ENCODE measurements at regions of chr1 and their contacts with region 1.

Region 1: GRCh38 chr1:202348509-202349205 is at the start of gene PPP1R12B:
- DNase-seq: peak; percentile 97
- ATAC-seq: peak; percentile 99
- H3K4me3 Mint-ChIP-seq: peak within 1 kb of the TSS; percentile 76
- H3K27ac Mint-ChIP-seq: peak within 1 kb of the TSS; percentile 86
- H3K4me1 Mint-ChIP-seq: peaks cover 22% of the 10 kb centered on the region
- H3K27me3 Mint-ChIP-seq: no peaks in the 10 kb centered on the region
- total RNA-seq, gene PPP1R12B: 10.3 to 13.2 TPM

Region 2: DNA sequence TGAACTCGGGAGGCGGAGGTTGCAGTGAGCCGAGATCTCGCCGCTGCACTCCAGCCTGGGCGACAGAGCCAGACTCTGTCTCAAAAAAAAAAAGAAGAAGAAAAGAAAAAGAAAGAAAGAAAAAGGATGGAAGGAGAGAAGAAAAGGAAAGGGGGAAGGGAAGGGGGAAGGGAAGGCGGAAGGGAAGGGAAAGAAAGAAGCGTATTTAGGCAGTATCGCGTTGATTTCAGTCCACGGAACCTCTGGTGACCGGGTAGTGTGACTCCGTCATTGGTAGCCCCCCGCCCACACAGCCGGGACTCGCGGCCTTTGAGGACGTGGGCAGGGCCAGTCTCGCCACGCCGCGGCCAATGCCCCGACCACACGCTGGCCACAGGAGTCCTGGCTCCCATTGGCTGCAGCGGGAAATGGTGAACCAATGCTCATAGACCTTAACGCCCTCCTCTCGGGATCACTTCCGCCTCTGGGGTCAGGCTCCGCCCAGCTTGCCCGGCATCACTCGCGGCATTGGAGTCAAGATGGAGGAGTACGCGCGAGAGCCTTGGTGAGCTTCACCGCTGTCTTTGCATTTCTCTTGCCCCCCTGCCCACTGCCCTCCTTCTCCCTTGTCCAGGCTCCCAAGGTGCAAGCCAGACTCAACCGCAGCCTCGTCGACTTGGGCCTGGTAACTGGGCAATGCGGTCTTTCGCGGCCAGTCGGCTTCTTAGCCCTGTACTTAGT is 393.5 kb before region 1 on chr1 and contains the start of gene TIMM17A:
- CTCF ChIA-PET with region 1: no interaction called
- POLR2A ChIA-PET with region 1: no interaction called
- intact Hi-C with region 1: loop called (anchors 2 to 10 kb)
- DNase-seq: peak; percentile 97
- ATAC-seq: peak; percentile 100
- H3K4me3 Mint-ChIP-seq: peak within 1 kb of the TSS; percentile 99
- H3K27ac Mint-ChIP-seq: peak within 1 kb of the TSS; percentile 97
- H3K4me1 Mint-ChIP-seq: peaks cover 16% of the 10 kb centered on the region
- H3K27me3 Mint-ChIP-seq: no peaks in the 10 kb centered on the region
- total RNA-seq, gene TIMM17A: 51.9 to 70.6 TPM

Region 3: DNA sequence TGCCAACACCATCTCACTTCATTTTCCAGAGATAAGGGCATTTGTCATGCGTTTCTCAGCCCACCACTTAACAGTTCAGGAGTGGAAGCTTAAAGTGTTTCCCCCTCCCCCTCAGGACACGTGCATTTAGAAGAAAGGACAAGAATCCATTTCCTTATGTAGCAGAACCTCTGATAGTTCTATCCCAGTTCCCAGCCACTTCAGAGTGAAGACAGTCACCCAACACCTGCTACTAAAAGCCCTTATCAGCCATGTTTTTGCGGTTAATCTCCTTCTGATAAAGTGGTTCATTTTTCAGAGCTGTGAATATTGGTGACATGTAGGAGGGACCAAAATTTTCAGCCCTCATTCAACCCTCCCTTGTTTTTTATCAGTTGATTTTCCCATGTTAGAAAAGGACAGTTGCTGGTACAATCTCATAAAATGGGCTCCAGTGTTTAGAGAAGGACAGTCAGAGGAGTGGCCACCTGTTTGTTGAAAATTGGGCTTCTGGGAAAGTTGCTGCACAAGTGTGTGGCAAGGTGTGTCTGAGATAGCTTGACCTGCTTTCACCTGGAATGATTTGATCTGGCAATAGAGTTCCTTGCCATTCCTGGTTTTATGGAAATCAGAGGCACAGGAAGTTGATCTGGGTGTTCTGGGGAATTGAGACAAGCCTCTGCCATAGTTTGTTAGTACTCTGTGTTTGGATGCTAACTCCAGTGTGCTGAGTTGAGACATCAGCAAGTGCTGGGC is 113.9 kb after region 1 on chr1:
- CTCF ChIA-PET with region 1: no interaction called
- POLR2A ChIA-PET with region 1: no interaction called
- intact Hi-C with region 1: loop called in 1 of 2 experiments (anchors 10 kb)
- DNase-seq: no peak
- ATAC-seq: no peak
- H3K4me3 Mint-ChIP-seq: no peak overlapping the region
- H3K27ac Mint-ChIP-seq: no peak overlapping the region
- H3K4me1 Mint-ChIP-seq: no peaks in the 10 kb centered on the region
- H3K27me3 Mint-ChIP-seq: no peaks in the 10 kb centered on the region

Region 4: GRCh38 chr1:202625416-202626360 is 277.0 kb after region 1 on chr1:
- CTCF ChIA-PET with region 1: no interaction called
- POLR2A ChIA-PET with region 1: no interaction called
- intact Hi-C with region 1: loop called (anchors 1 to 10 kb)
- DNase-seq: peak; percentile 82
- ATAC-seq: peak; percentile 82
- H3K4me3 Mint-ChIP-seq: no peak overlapping the region
- H3K27ac Mint-ChIP-seq: no peak overlapping the region
- H3K4me1 Mint-ChIP-seq: peaks cover 27% of the 10 kb centered on the region
- H3K27me3 Mint-ChIP-seq: peaks cover 5% of the 10 kb centered on the region

Region 5: DNA sequence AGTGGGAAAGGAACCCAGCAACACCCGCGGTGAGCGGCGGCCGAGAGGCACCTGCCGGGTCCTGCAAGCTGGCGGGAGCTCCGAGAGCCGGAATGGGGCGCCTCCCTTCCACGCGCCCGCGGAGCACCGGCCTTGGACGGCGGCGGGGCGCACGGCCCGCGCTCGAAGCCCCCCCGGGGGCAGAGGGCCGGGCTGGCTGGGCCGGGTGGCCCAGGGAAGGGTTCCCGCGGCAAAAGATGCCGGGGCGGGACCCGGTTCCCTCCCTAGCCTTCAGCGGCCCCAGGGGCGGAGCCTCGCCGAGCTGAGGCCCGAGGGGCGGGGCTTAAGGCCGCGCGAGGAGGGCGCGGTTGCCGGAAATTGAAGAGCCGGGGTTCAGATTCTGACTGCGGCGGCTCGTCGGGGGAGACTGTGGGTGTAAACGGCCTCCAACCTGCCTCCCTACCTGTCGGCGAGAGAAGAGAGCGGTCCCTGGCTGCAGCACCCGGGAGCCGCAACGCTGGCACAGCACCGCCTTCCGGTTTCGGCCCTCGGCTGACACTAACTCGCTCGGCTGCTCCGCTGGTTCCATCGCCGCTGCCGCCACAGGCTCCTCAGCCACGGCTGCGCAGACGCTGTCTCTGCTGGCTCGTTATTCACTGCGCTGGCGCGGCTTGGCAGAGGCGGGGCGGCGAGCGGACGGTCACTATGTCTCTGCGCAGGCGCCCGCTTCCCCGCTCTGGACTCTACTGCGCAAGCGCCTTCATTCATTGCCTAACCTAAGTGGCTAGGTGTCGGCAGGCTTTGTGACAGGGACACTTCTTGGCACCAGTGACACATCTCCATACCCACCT is 540.1 kb after region 1 on chr1 and contains the start of gene RABIF:
- CTCF ChIA-PET with region 1: interaction called, 3 read pairs
- POLR2A ChIA-PET with region 1: no interaction called
- intact Hi-C with region 1: loop called in 1 of 2 experiments (anchors 1 kb)
- DNase-seq: peak; percentile 98
- ATAC-seq: peak; percentile 94
- H3K4me3 Mint-ChIP-seq: peak within 1 kb of the TSS; percentile 91
- H3K27ac Mint-ChIP-seq: peak within 1 kb of the TSS; percentile 96
- H3K4me1 Mint-ChIP-seq: peaks cover 15% of the 10 kb centered on the region
- H3K27me3 Mint-ChIP-seq: no peaks in the 10 kb centered on the region
- total RNA-seq, gene RABIF: 6.8 to 7.4 TPM

Region 6: GRCh38 chr1:202957733-202958543 is 609.3 kb after region 1 on chr1 and contains the start of gene ADIPOR1:
- CTCF ChIA-PET with region 1: no interaction called
- POLR2A ChIA-PET with region 1: no interaction called
- intact Hi-C with region 1: loop called in 1 of 2 experiments (anchors 2 kb)
- DNase-seq: peak; percentile 96
- ATAC-seq: peak; percentile 100
- H3K4me3 Mint-ChIP-seq: peak within 1 kb of the TSS; percentile 83
- H3K27ac Mint-ChIP-seq: peak within 1 kb of the TSS; percentile 82
- H3K4me1 Mint-ChIP-seq: peaks cover 46% of the 10 kb centered on the region
- H3K27me3 Mint-ChIP-seq: no peaks in the 10 kb centered on the region
- total RNA-seq, gene ADIPOR1: 65.4 to 85.1 TPM